ENCODE measurements at regions of chr6 and their contacts with region 1.

Region 1: DNA sequence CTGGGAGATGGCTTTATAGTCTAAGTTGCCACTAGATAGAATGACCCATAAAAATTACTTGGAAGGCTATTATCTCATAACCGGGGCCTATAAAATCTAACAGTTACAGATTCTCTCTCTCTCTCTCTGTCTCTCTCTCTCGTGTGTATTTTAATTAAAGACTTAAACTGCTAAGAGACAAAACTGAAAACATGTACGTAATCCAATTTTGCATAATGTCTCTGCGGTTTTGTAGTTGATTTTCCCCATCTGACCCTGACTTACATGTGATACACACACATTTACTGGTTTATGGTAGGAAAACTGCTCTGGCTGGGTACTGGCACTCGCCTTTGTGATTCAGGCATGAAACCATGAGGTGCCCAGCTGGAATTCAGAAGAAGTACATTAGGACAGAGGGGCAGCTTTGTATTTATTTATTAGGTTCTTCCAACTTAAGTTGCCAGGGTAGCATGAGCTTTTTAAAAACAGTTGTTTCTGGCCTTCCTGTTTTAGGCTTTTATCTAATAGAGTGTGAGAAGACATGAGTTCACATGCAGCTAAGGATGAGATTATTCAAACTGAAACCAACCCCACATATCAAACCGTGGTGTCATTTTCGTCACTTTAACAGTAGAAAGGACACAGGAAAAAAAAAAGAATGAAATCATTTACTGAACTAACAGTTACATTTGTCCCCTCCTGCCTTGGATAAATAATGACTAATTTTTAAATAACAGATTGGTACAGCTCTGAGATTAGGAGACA is 182.5 kb downstream of the GMPR start:
- DNase-seq: peak; percentile 49
- H3K4me3 Mint-ChIP-seq: peak overlapping the region; percentile 29
- H3K27ac Mint-ChIP-seq: peak overlapping the region; percentile 99
- H3K4me1 Mint-ChIP-seq: peaks cover 55% of the 10 kb centered on the region
- H3K27me3 Mint-ChIP-seq: no peaks in the 10 kb centered on the region

Region 2: DNA sequence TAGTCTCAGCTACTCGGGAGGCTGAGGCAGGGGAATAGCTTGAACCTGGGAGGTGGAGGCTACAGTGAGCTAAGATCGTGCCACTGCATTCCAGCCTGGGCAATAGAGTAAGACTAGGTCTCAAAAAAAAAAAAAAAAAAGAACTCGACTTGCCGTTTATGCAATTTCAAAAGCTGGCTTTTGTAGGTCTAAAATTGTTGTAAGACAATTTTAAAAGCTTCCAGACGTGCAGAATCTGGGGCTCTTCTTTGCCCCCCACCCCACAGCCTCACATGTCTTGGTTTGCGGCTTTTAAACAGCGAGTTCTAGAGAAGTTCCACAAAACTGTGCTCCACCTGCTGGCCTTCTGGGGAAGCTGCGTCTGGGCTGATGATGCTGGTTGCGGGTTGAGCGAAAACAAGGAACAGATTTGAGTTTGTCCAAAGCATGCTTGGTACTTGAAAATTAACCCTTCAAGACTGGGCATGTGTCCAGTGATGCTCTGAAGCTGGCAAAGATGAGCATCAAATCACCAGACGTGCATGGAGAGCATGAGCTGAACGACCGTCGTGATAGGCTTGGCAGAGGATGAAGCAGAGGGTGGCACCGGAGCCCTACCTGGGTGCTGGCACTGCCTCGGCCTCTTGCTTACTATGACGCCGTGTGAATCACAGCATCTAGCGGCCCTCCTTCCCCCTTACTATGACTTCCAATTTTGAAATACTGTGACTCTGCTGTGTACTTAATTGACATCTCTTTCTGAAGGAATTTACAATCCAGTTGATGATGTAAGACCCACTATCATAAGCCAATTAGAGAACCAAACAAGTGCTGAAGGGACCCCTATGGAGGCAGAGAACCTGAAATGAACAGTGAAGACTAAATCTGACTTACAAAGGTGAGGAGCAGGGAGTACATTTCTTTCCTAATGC is 11.1 kb before region 1 on chr6:
- CTCF ChIA-PET with region 1: interaction called, 26 read pairs
- POLR2A ChIA-PET with region 1: interaction called, 27 read pairs
- DNase-seq: peak; percentile 73
- H3K4me3 Mint-ChIP-seq: peak overlapping the region; percentile 63
- H3K27ac Mint-ChIP-seq: peak overlapping the region; percentile 73
- H3K4me1 Mint-ChIP-seq: peaks cover 65% of the 10 kb centered on the region
- H3K27me3 Mint-ChIP-seq: no peaks in the 10 kb centered on the region

Region 3: GRCh38 chr6:16481697-16482399 is 61.0 kb after region 1 on chr6:
- CTCF ChIA-PET with region 1: interaction called, 4 read pairs
- POLR2A ChIA-PET with region 1: interaction called, 13 read pairs
- DNase-seq: peak; percentile 80
- H3K4me3 Mint-ChIP-seq: peak overlapping the region; percentile 46
- H3K27ac Mint-ChIP-seq: peak overlapping the region; percentile 94
- H3K4me1 Mint-ChIP-seq: peaks cover 94% of the 10 kb centered on the region
- H3K27me3 Mint-ChIP-seq: no peaks in the 10 kb centered on the region

Region 4: GRCh38 chr6:16698997-16699868 is 278.3 kb after region 1 on chr6:
- CTCF ChIA-PET with region 1: no interaction called
- POLR2A ChIA-PET with region 1: interaction called, 10 read pairs
- DNase-seq: no peak
- H3K4me3 Mint-ChIP-seq: peak overlapping the region; percentile 78
- H3K27ac Mint-ChIP-seq: peak overlapping the region; percentile 96
- H3K4me1 Mint-ChIP-seq: peaks cover 83% of the 10 kb centered on the region
- H3K27me3 Mint-ChIP-seq: no peaks in the 10 kb centered on the region

Measured in activated CD4-positive, alpha-beta memory T cell treated with anti-CD3 and anti-CD28 coated beads, Interleukin-2, amount 10 ng/mL, durations not matched to agents 7 days and 5 days (primary cell).